Panc1 (cell line): ENCODE measurements at regions of chr2 and their contacts with region 1.

Region 1: GRCh38 chr2:162297925-162298552 is 20.4 kb downstream of the IFIH1 start:
- DNase-seq: no peak
- ATAC-seq: peak; percentile 72; the same call in 1 of the 2 replicates
- H3K4me3 ChIP-seq: no peak overlapping the region
- H3K27ac ChIP-seq: no peak overlapping the region
- H3K4me1 ChIP-seq: no peaks in the 10 kb centered on the region
- H3K27me3 ChIP-seq: no peaks in the 10 kb centered on the region
- CTCF ChIP-seq: peak; percentile 79

Region 2: DNA sequence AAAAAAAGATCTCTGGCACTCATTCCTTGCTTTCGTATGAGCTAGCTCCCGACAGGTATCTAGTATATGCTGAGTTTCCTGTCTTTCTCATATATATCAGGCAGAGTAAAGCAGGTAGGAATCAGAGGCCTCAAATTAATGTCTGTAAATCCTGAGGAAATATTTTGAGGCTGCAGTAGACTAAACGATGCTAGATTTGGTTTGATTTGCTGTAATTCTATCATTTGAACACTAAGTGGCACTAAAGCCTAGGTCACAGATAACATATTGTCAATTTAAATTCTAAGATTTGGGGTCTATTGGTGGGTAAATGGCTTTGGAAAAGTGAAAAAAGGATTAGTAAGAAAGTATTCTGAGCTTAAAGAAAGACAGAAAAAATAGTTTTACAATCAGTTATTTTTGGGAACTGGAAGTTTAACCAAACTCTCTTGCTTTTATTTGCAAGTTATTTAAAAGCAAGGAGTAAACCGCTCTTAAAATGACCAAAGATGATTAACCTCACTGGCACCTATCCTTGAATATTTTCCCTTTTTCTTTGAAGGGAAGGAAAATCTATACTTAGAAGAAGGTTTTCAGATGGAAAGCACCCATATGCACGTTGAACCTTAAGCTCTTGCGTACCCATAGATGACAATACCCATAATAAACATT is 711.4 kb before region 1 on chr2:
- CTCF ChIA-PET with region 1: no interaction called
- POLR2A ChIA-PET with region 1: no interaction called
- in situ Hi-C with region 1: no loop called
- intact Hi-C with region 1: loop called (anchors 10 kb)
- DNase-seq: peak; percentile 17
- ATAC-seq: peak; percentile 62; the same call in 1 of the 2 replicates
- H3K4me3 ChIP-seq: no peak overlapping the region
- H3K27ac ChIP-seq: no peak overlapping the region
- H3K4me1 ChIP-seq: no peaks in the 10 kb centered on the region
- H3K27me3 ChIP-seq: no peaks in the 10 kb centered on the region
- CTCF ChIP-seq: peak; percentile 75; the same call in 1 of the 2 replicates

Region 3: GRCh38 chr2:162007447-162008040 is 290.5 kb before region 1 on chr2:
- CTCF ChIA-PET with region 1: no interaction called
- POLR2A ChIA-PET with region 1: no interaction called
- in situ Hi-C with region 1: no loop called
- intact Hi-C with region 1: loop called (anchors 10 kb)
- DNase-seq: no peak
- ATAC-seq: no peak
- H3K4me3 ChIP-seq: no peak overlapping the region
- H3K27ac ChIP-seq: no peak overlapping the region
- H3K4me1 ChIP-seq: no peaks in the 10 kb centered on the region
- H3K27me3 ChIP-seq: no peaks in the 10 kb centered on the region; the same call in 1 of the 2 replicates
- CTCF ChIP-seq: peak; percentile 26; the same call in 1 of the 2 replicates

Region 4: DNA sequence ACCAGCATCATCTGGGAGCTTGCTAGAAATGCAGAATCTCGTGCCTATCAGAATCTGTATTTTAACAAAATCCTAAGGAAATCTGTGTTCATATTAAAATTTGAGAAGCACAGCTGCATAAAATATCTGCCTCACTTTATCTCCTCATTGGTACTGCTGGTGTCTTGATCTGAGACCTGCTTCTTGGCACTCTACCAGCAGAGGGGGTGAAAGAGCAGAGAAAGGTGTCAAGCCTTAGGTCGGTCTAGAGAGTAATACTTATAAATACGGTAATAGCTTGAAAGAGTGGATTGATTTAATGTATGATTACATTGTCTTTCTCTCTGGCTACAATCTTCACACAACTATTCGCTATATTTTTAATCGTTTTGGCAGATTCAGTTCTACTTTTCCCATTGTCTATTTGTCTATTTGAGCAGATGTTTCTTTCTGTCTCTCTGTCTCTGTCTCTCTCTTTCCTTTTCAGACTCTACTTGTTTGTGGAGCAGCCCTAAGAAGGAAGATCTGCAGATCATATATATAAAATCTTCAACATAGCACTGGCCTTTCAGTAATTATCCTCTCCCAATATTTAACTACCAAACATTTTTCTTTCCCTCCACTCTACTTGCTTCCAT is 144.3 kb before region 1 on chr2:
- CTCF ChIA-PET with region 1: interaction called, 3 read pairs
- POLR2A ChIA-PET with region 1: no interaction called
- in situ Hi-C with region 1: no loop called
- intact Hi-C with region 1: loop called (anchors 2 kb)
- DNase-seq: peak; percentile 46
- ATAC-seq: peak; percentile 86
- H3K4me3 ChIP-seq: no peak overlapping the region
- H3K27ac ChIP-seq: no peak overlapping the region
- H3K4me1 ChIP-seq: no peaks in the 10 kb centered on the region
- H3K27me3 ChIP-seq: no peaks in the 10 kb centered on the region; the same call in 1 of the 2 replicates
- CTCF ChIP-seq: peak; percentile 70

Region 5: DNA sequence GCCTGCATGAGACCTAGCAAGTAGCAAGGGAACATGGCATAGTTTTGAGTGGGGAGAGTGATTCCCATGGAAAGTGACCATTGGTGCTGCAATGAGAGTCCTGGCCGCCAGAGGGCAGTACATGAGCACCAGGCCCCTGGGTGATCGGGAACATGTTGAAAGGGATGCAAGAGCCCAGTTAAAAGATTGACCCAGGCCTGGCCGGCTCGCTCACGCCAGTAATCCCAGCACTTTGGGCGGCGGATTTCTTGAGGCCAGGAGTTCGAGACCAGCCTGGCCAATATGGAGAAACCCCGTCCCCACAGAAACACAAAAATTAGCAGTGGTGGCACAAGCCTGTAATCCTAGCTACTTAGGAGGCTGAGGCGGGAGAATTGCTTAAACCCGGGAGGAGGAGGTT is 77.0 kb before region 1 on chr2:
- CTCF ChIA-PET with region 1: interaction called, 27 read pairs
- POLR2A ChIA-PET with region 1: no interaction called
- in situ Hi-C with region 1: no loop called
- intact Hi-C with region 1: loop called (anchors 1 kb)
- DNase-seq: peak; percentile 60
- ATAC-seq: peak; percentile 93
- H3K4me3 ChIP-seq: no peak overlapping the region
- H3K27ac ChIP-seq: no peak overlapping the region
- H3K4me1 ChIP-seq: no peaks in the 10 kb centered on the region
- H3K27me3 ChIP-seq: no peaks in the 10 kb centered on the region
- CTCF ChIP-seq: peak; percentile 93